ENCODE measurements at regions of chr10 and their contacts with region 1.

Region 1: DNA sequence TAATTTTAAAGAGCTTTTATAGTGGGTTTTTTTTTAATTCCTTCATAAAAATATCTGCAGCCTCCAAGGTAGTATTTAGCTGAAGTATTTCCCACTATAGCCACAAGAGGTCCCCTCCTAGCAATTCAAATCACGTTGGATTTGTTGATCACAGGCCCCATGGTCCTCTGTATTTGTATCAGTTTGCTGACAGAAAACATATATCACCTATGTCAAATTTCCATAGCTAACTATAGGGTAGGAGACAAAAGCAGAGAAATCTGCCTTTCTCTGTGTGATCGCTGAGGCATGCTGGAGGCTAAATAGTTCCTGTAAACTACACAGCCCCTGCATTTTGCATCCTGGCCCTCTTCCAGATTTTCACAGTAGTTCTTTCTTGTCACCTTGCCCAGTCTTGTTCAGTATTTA is 1.7 kb upstream of the CTNNA3 start:
- DNase-seq: peak; percentile 20
- H3K4me3 ChIP-seq: no peak overlapping the region
- H3K27ac ChIP-seq: no peak overlapping the region
- H3K27me3 ChIP-seq: peaks cover 3% of the 10 kb centered on the region
- CTCF ChIP-seq: peak; percentile 78

Region 2: DNA sequence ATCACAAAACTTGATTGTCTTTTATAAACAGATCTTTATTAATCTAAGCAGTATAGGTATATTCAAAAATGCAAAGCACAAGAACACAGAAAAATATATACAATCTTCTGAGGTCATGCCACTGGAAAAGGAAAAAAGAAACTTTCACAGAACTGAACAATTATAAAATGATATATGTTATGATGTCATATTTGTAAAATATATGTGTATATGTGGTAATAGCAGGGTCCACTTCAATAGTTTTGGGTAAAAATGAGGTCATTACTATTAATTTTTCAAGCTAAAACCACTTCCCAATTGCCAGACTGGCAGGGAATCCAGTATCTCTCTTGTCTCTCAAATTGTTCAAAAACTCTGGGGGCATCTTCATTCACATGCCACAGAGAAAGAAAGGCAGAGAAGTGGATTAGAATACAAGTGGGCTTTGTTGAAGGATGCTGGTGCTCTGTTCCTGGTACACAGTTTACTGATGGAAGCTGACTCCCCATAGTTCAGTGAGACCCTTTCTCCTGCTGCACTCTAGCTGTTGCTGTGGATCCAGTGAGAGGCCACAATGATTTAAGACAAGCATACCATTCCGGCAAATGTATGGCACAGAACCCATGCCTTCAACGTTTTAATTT is 21.4 kb before region 1 on chr10:
- CTCF ChIA-PET with region 1: interaction called, 12 read pairs
- POLR2A ChIA-PET with region 1: no interaction called
- DNase-seq: no peak
- H3K4me3 ChIP-seq: no peak overlapping the region
- H3K27ac ChIP-seq: no peak overlapping the region
- H3K27me3 ChIP-seq: no peaks in the 10 kb centered on the region
- CTCF ChIP-seq: no peak

Region 3: GRCh38 chr10:67764012-67764822 is 66.5 kb after region 1 on chr10:
- CTCF ChIA-PET with region 1: interaction called, 12 read pairs
- POLR2A ChIA-PET with region 1: no interaction called
- DNase-seq: peak; percentile 87
- H3K4me3 ChIP-seq: peak overlapping the region; percentile 82
- H3K27ac ChIP-seq: peak overlapping the region; percentile 68
- H3K27me3 ChIP-seq: no peaks in the 10 kb centered on the region
- CTCF ChIP-seq: no peak

Region 4: DNA sequence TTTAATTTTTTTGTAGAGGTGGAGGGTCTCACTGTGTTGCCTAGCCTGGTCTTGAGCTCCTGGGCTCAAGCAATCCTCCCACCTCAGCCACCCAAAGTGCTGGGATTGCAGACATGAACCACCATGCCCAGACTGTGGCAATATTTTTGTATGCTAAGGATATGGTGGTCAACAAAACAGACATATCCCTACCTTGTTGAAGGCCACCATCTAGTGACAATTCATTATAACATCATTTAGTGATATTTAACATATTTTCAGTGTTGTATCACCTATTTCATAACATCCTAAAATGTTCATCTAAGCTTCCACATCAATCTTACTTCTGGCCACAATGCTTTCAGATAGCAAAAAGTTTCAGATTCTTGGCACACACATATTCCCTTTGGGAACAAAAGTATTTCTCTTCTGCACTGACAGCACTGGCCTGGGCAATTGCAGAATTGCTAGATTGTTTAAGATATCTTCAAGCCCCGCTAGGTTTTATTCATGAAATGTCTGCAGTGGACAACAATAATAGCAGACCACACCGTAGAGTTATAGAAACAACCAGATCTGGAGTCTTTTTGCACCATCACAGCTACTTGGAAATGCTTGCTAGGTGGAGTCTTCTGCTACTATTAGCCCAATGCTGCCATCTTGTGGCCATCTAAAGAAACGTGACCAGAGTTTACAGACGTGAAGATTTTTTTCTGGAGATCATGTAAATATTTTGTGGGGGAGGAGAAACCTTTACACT is 81.9 kb after region 1 on chr10:
- CTCF ChIA-PET with region 1: interaction called, 187 read pairs
- POLR2A ChIA-PET with region 1: no interaction called
- DNase-seq: peak; percentile 73
- H3K4me3 ChIP-seq: no peak overlapping the region
- H3K27ac ChIP-seq: no peak overlapping the region
- H3K27me3 ChIP-seq: no peaks in the 10 kb centered on the region
- CTCF ChIP-seq: peak; percentile 82

Measured in AG04450 (cell line).